AG04450 (cell line): ENCODE measurements at regions of chr22 and their contacts with region 1.

Region 1: GRCh38 chr22:22463855-22464540 is 44.5 kb downstream of the ZNF280B start:
- DNase-seq: peak; percentile 34
- H3K4me3 ChIP-seq: no peak overlapping the region
- H3K27ac ChIP-seq: no peak overlapping the region
- H3K27me3 ChIP-seq: peaks cover 8% of the 10 kb centered on the region
- CTCF ChIP-seq: peak; percentile 76

Region 2: DNA sequence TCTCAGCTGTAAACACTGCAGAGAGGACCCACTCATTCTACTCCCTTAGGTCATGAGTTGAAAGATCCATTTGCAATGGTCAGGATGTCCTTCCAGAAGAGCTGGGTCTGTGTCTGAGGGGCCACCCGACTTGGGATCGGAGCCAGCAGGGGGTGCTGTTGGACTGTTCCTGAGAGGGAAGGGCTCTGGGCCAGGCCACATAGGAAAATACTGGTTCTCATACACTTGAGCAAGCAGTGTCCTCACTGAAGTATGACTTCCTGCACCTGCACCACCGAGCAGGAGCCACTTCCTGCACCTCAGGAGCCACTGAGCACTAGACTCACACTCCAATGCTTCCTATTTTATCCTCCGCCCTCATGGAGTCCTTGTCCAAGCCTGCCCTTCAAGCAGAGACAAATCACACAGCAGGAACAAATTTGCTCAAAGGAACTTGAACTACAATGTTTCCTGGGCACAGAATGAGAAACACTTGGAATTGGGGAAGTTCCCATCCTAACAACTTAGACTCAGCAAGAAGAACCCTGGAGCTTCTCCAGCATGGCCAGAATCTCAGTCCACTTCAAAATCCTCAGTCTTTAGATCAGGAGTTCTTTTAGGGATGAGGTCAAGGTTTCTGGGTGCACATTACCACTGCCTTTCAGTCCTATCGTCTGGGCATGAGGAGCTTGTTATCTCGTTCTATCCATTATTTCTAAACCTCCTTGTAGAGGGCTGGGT is 256.0 kb before region 1 on chr22:
- CTCF ChIA-PET with region 1: interaction called, 12 read pairs
- POLR2A ChIA-PET with region 1: no interaction called
- DNase-seq: peak; percentile 39
- H3K4me3 ChIP-seq: no peak overlapping the region
- H3K27ac ChIP-seq: no peak overlapping the region
- H3K27me3 ChIP-seq: peaks cover 10% of the 10 kb centered on the region
- CTCF ChIP-seq: peak; percentile 83

Region 3: DNA sequence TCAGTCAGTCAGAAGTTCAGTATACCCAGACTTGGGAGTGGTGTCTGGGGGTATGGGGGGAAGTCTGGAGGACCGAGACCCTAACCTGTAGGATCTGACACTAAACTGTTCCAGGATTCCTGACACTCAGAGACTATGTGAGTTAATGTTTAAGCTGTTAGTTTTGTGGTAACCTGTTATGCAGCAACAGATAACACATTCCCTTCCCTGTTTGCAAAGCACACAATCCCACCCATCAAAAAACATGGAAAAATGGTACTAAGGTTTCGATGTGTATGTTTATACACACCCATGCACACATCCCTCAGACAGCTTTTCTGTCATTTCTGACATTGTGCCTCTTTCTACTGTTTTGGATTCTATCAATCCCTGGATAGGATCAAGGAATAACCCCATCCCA is 16.9 kb after region 1 on chr22:
- CTCF ChIA-PET with region 1: interaction called, 12 read pairs
- POLR2A ChIA-PET with region 1: no interaction called
- DNase-seq: no peak
- H3K4me3 ChIP-seq: no peak overlapping the region
- H3K27ac ChIP-seq: no peak overlapping the region
- H3K27me3 ChIP-seq: no peaks in the 10 kb centered on the region
- CTCF ChIP-seq: no peak

Region 4: DNA sequence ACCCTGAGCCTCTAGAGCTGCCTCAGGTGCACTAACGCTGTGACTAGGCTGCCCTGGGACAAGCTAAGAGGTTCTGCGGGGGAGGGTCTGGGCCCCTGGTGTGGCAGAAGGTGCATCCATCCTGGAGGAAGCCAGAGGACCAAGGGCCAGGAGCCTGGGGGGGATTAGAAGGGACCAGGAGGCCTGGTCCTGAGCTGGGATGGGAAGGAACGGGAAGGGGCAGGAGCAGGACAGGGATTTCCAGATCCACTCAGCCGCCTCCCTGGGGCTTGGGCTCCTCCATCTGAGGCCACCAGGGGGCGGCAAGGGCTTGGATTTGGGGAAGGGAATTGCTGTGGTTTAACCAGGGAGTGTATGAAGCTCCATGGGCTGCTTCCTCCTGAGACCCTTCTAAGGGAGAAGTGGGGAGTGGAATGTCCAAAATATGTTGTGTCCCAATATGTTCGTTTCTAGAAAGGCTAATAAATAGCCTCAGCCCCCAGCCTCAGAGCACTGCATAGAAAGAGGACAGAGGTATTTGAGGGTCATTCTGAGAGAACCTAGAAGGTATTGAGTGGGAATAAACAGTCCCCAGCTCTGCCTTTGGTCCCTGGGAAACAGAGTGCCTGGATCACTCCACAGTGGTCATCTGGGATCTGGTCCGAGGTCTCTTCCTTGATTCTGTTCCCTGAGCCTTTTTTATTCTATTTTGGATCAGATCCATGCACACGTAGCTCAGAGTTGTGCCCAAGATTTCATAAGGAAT is 112.4 kb after region 1 on chr22:
- CTCF ChIA-PET with region 1: interaction called, 10 read pairs
- POLR2A ChIA-PET with region 1: no interaction called
- DNase-seq: no peak
- H3K4me3 ChIP-seq: no peak overlapping the region
- H3K27ac ChIP-seq: no peak overlapping the region
- H3K27me3 ChIP-seq: peaks cover 10% of the 10 kb centered on the region
- CTCF ChIP-seq: peak; percentile 82

Region 5: GRCh38 chr22:22591348-22592299 is 127.6 kb after region 1 on chr22:
- CTCF ChIA-PET with region 1: interaction called, 21 read pairs
- POLR2A ChIA-PET with region 1: no interaction called
- DNase-seq: no peak
- H3K4me3 ChIP-seq: no peak overlapping the region
- H3K27ac ChIP-seq: no peak overlapping the region
- H3K27me3 ChIP-seq: peaks cover 5% of the 10 kb centered on the region
- CTCF ChIP-seq: no peak